Dendritic cell treated with granulocyte-macrophage colony-stimulating factor and Interleukin-4, amounts not matched to agents 40 ng/mL and 50 ng/mL, for 4 days (primary cell): ENCODE measurements at regions of chr11 and their contacts with region 1.

Region 1: GRCh38 chr11:119196833-119197483 is 9.2 kb upstream of the CBL start:
- H3K4me3 Mint-ChIP-seq: no peak overlapping the region
- H3K27ac Mint-ChIP-seq: no peak overlapping the region
- H3K4me1 Mint-ChIP-seq: peaks cover 45% of the 10 kb centered on the region
- H3K27me3 Mint-ChIP-seq: no peaks in the 10 kb centered on the region

Region 2: GRCh38 chr11:119144825-119145486 is 52.0 kb before region 1 on chr11:
- intact Hi-C with region 1: loop called (anchors 5 kb)
- H3K4me3 Mint-ChIP-seq: no peak overlapping the region
- H3K27ac Mint-ChIP-seq: no peak overlapping the region
- H3K4me1 Mint-ChIP-seq: peaks cover 39% of the 10 kb centered on the region
- H3K27me3 Mint-ChIP-seq: peaks cover 47% of the 10 kb centered on the region

Region 3: DNA sequence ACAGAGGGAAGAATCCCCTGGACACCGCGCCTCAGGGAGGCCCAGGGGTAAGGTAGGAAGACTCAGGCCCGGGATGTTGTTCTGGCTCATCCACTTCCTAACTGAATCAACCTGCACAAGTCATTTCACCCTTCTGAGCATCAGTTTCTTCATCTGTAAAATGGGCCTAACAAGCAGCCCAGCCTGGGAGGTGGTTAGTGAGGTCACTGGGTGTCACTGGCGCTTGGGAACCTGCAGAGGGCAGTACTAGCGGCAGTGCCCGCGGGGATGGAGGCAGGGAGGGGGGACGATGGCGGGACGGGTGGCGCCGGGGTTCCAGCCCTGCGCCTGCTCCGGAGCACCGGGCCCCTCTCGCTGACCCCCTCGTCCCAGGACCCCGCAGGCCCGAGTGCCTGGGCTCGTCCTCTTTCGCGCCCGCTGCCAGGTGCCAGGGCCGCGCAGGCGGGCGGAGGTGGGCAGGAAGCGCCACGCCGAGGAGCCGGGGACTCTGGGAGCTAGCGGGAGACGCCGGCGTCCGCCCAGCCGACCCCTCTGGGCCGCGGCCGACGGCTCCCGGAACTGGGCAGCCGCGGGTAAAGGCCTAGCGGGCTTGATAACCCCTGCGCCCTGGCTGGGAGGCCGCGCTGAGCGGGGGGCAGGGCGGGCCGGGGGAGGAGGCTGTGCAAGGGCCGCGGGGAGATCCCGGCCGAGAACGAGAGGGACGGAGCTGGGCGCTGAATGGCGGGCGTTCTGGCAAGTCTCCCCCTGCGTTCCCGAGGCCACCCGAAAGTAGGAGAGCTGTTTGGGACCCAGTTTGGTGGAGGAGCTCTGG is 28.3 kb before region 1 on chr11 and contains the start of gene NLRX1:
- intact Hi-C with region 1: loop called (anchors 2 kb)
- H3K4me3 Mint-ChIP-seq: peak within 1 kb of the TSS; percentile 88
- H3K27ac Mint-ChIP-seq: peak within 1 kb of the TSS; percentile 88
- H3K4me1 Mint-ChIP-seq: peaks cover 35% of the 10 kb centered on the region
- H3K27me3 Mint-ChIP-seq: no peaks in the 10 kb centered on the region

Region 4: DNA sequence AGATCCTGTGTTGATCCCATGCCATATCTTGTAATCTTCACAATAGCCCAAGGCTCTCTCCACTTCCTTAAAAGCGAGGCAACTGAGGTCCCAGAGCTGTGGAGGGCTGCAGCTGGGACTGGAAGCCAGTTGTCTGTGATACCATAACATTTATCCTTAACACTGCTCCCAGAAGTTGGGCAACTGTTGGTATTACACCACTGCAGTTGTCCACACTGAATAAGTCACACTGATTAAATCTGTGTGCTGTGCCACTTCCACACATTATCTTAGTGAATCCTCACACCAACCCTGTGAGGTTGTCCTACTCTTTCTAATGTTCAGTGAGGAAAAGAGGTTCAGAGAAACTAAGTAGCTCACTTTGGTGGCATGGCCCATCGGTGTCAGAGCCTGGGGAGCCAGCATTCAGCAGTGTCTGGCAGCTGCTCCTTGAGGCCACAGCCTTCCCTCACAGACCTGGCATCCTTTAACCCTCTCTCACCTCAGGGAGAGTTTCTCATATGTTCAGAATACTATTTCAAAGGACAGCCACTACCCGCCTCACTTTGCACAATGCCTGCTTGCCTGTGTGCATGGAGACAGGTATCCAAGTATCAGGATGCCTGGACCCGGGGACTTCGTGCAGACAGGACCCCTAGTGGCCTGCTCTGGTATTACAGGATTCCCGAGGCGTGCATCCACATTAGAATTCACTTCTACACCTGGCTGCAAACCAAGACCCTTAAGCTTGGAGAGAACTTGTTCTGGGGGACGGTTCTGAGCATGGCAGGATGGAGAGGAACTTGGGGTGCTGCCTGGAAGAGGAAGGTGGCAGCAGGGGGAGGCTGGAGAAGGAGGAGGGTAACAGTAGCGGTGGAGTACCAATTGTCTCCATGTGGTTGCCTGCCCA is 1605.1 kb after region 1 on chr11:
- intact Hi-C with region 1: no loop called
- H3K4me3 Mint-ChIP-seq: no peak overlapping the region
- H3K27ac Mint-ChIP-seq: no peak overlapping the region
- H3K4me1 Mint-ChIP-seq: no peaks in the 10 kb centered on the region
- H3K27me3 Mint-ChIP-seq: peaks cover 16% of the 10 kb centered on the region